IMR-90 (cell line): ENCODE measurements at regions of chr1 and their contacts with region 1.

Region 1: DNA sequence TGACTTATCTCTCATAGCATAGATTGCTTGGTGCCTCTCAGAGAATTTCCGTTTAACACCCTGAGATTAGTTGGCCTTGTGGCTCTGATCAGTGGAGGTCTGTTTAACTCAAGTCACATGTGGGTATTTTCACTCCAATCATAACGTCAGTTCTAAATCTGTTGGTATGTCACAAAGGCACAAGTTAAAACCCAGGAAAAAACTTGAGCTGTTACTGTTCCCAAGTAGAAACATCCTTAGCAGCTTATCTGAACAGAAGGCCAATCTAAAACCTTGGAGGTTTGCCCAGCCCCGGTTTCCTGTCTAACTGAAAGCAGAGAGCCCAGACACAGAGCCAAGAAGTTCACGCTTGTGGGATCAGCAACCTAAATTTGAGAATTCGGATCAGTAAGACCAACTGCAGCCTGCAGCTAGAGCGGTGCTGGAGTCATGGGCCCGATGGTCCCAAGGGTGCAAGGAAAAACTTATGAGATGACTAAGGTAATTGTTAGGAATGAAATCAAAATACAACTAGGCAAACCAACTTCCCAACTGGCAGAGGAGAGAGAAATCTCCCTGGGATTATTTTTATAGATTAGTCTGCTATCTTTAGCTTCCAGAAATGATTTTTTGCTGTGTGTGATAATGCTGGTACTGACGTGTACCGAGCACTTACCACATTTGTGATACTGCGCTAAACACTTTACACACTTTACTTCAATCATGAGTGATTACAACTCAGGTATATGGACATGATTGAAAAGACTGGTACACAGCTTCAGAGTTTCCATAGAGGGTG is 90.2 kb upstream of the C1orf21 start:
- DNase-seq: peak; percentile 91
- ATAC-seq: peak; percentile 38
- H3K4me3 ChIP-seq: no peak overlapping the region
- H3K27ac ChIP-seq: peak overlapping the region; percentile 13; the same call in 1 of the 2 replicates
- H3K4me1 ChIP-seq: peaks cover 29% of the 10 kb centered on the region
- H3K27me3 ChIP-seq: no peaks in the 10 kb centered on the region
- CTCF ChIP-seq: no peak
- POLR2A ChIP-seq: no peak
- RAD21 ChIP-seq: no peak

Region 2: DNA sequence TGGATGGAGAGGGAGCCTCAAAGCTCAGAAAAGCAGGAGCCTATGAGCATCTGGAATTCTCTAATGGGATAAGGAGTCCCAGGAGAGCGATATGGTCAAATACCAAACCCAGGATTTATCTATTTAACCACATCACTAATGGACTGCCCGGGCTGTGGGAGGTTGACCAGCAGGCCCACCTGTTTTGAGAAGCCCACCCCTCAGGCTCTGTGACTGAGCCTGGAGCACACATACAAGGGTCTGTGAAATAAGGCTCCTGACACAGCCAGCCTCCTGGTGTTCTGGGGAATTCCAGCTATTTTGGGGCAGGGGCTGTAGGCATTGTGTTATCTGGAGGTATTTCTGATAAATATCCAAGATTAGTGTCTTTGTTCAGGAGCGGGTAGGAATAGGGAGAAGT is 41.8 kb before region 1 on chr1:
- CTCF ChIA-PET with region 1: no interaction called
- POLR2A ChIA-PET with region 1: no interaction called
- dilution Hi-C with region 1: no loop called
- in situ Hi-C with region 1: loop called (anchors 5 kb)
- intact Hi-C with region 1: no loop called
- DNase-seq: no peak
- ATAC-seq: no peak
- H3K4me3 ChIP-seq: no peak overlapping the region
- H3K27ac ChIP-seq: no peak overlapping the region
- H3K4me1 ChIP-seq: no peaks in the 10 kb centered on the region
- H3K27me3 ChIP-seq: peaks cover 18% of the 10 kb centered on the region
- CTCF ChIP-seq: no peak
- POLR2A ChIP-seq: no peak
- RAD21 ChIP-seq: no peak